ENCODE measurements at regions of chr3 and their contacts with region 1.

Region 1: DNA sequence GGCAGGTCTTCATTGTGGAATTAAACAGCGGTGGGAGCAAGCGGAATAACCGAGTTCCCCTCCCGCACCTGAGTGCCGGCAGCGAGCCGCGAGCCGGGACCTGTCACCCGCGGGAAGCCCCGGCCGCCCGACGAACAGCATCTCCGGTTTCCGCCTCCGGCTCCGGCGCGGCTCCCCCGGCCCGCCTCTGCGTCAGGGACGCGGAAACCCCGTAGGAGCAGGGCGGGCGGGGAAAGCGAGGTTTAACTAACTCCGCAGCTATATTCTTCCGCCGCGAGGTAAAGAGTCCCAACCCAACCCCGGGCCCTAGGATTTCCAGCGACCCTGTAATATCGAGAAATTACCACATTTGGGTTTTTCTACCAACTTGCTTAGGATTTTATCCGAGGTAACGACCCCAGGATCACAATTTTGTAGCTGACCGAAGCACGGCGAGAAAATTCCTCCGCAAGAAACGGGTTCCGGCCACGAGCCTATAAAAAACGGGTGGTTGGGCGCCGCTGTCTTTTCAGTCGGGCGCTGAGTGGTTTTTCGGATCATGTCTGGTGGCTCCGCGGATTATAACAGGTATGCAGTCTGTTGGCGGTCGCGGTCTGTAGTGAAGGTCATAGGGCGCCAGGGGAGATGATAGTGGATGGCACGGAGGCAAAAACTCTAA is at the start of gene EIF4A2:
- DNase-seq: peak; percentile 92 to 96
- H3K4me3 ChIP-seq: peak within 1 kb of the TSS; percentile 65 to 98 (median 80)
- H3K27ac ChIP-seq: peak within 1 kb of the TSS; percentile 96 to 99 (median 98)
- H3K4me1 ChIP-seq: peaks cover 36 to 46% (median 43%) of the 10 kb centered on the region in 4 donors
- H3K27me3 ChIP-seq: no peaks in the 10 kb centered on the region
- CTCF ChIP-seq: no peak
- EP300 ChIP-seq: no peak
- POLR2A ChIP-seq: peak in 2 of 4 donors; percentile 78 to 93
- total RNA-seq, gene EIF4A2: 165 to 1,058 (median 464) TPM

Region 2: GRCh38 chr3:186570096-186570940 is 212.9 kb before region 1 on chr3 and contains the start of gene DNAJB11:
- intact Hi-C with region 1: loop called (anchors 10 kb)
- DNase-seq: peak; percentile 99 to 100
- H3K4me3 ChIP-seq: peak within 1 kb of the TSS; percentile 82 to 92 (median 83)
- H3K27ac ChIP-seq: peak within 1 kb of the TSS; percentile 94 to 98 (median 96)
- H3K4me1 ChIP-seq: peaks cover 26 to 79% (median 55%) of the 10 kb centered on the region in 4 donors
- H3K27me3 ChIP-seq: no peaks in the 10 kb centered on the region
- CTCF ChIP-seq: no peak
- EP300 ChIP-seq: no peak
- POLR2A ChIP-seq: peak in 2 of 4 donors; percentile 10 to 66
- total RNA-seq, gene DNAJB11: 17.0 to 62.1 (median 31.6) TPM

Measured in stomach (tissue), 19 donors.